ENCODE measurements at regions of chr11 and their contacts with region 1.

Region 1: DNA sequence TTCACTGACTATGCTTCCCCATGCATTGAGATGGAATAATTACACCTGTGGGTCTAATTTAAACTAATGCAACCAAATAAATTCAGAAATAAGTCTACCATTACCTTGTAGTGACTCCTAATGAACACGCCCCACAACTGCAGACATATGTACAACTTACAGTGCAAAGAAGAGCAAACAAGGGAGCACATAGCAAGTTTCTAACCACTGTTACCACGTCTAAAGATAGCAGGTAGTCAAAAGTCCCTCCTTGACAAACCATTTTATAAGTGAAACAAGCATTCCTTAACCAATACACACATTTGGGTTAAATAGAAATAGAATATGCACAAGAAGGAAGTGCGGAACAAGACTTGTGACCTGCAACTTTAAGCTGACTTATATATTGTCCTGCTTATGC is 20.6 kb downstream of the PHF21A start:
- DNase-seq: no peak
- ATAC-seq: no peak
- H3K4me3 ChIP-seq: no peak overlapping the region
- H3K27ac ChIP-seq: no peak overlapping the region
- H3K4me1 ChIP-seq: peaks cover 12% of the 10 kb centered on the region
- H3K27me3 ChIP-seq: no peaks in the 10 kb centered on the region
- CTCF ChIP-seq: no peak

Region 2: DNA sequence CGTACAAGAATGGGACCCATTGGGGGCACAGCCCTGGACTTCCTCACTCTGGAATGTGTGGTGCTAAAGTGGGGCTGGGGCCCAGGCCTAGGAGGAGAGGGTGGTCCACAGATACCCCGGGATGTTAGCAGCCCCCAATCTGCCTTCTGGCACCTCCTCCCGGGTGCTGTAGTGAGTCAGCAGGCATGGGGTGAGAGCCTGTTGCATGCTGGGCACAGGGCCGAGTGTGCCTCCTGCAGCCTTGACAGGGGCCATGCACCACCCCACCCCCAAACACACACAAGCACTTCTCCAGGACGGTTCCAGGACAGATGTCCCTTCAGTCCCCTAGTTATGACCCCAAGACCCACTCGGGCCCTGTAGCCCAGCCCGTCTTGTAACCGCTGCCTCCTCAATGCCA is 44.1 kb after region 1 on chr11:
- CTCF ChIA-PET with region 1: no interaction called
- POLR2A ChIA-PET with region 1: no interaction called
- in situ Hi-C with region 1: no loop called
- intact Hi-C with region 1: no loop called
- DNase-seq: no peak
- ATAC-seq: no peak
- H3K4me3 ChIP-seq: no peak overlapping the region
- H3K27ac ChIP-seq: no peak overlapping the region
- H3K4me1 ChIP-seq: no peaks in the 10 kb centered on the region
- H3K27me3 ChIP-seq: no peaks in the 10 kb centered on the region
- CTCF ChIP-seq: no peak

Region 3: GRCh38 chr11:46308631-46309419 is 208.2 kb after region 1 on chr11:
- CTCF ChIA-PET with region 1: no interaction called
- POLR2A ChIA-PET with region 1: interaction called, 11 read pairs
- in situ Hi-C with region 1: no loop called
- intact Hi-C with region 1: no loop called
- DNase-seq: peak; percentile 48
- ATAC-seq: peak; percentile 93
- H3K4me3 ChIP-seq: no peak overlapping the region
- H3K27ac ChIP-seq: no peak overlapping the region
- H3K4me1 ChIP-seq: no peaks in the 10 kb centered on the region
- H3K27me3 ChIP-seq: no peaks in the 10 kb centered on the region
- CTCF ChIP-seq: peak; percentile 96

Measured in Panc1 (cell line).